ENCODE measurements at regions of chr2 and their contacts with region 1.

Region 1: GRCh38 chr2:54787755-54788366 is 64.4 kb downstream of the EML6 start:
- DNase-seq: peak; percentile 93
- H3K4me3 ChIP-seq: peak overlapping the region; percentile 71
- H3K27ac ChIP-seq: peak overlapping the region; percentile 95
- H3K4me1 ChIP-seq: peaks cover 81% of the 10 kb centered on the region
- CTCF ChIP-seq: no peak

Region 2: GRCh38 chr2:54522624-54523281 is 265.1 kb before region 1 on chr2:
- CTCF ChIA-PET with region 1: no interaction called
- POLR2A ChIA-PET with region 1: no interaction called
- intact Hi-C with region 1: no loop called
- DNase-seq: peak; percentile 89
- H3K4me3 ChIP-seq: no peak overlapping the region
- H3K27ac ChIP-seq: no peak overlapping the region
- H3K4me1 ChIP-seq: peaks cover 15% of the 10 kb centered on the region
- CTCF ChIP-seq: peak; percentile 93

Region 3: GRCh38 chr2:54558188-54559005 is 229.5 kb before region 1 on chr2:
- CTCF ChIA-PET with region 1: no interaction called
- POLR2A ChIA-PET with region 1: interaction called, 3 read pairs
- intact Hi-C with region 1: loop called (anchors 5 kb)
- DNase-seq: peak; percentile 89
- H3K4me3 ChIP-seq: peak overlapping the region; percentile 85
- H3K27ac ChIP-seq: peak overlapping the region; percentile 79
- H3K4me1 ChIP-seq: peaks cover 43% of the 10 kb centered on the region
- CTCF ChIP-seq: no peak

Region 4: GRCh38 chr2:54634564-54635511 is 153.0 kb before region 1 on chr2:
- CTCF ChIA-PET with region 1: no interaction called
- POLR2A ChIA-PET with region 1: no interaction called
- intact Hi-C with region 1: loop called (anchors 10 kb)
- DNase-seq: peak; percentile 92
- H3K4me3 ChIP-seq: peak overlapping the region; percentile 53
- H3K27ac ChIP-seq: peak overlapping the region; percentile 97
- H3K4me1 ChIP-seq: peaks cover 90% of the 10 kb centered on the region
- CTCF ChIP-seq: no peak

Region 5: DNA sequence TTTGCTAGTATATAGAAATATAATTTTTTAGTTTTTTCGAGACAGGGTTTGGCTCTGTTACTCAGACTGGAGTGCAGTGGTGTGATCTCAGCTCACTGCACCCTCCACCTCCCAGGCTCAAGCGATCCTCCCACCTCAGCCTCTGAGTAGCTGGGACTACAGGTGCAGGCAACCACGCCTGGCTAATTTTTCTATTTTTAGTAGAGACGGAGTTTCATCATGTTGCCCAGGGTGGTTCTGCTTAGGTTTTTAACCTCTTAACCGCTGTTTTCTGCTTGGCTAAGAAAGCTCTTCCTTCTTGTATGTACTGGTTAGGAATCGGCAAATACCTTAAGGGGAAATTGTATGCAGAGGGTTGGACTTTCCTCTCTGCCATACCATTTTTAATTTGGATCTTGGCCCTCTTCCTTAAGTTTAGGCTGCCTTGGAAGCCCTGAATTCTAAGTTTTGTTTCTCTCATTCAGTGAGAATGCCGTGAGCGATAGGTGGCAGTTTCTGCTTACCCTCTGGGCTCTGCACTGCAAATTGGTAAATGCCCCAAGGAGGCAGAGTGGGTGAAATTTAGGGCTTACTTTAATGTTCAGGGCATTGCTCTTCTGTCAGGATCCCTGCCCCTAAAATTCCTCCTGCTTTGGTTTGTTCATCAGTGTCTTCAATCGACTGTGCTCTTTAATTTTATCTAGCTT is 32.1 kb before region 1 on chr2:
- CTCF ChIA-PET with region 1: no interaction called
- POLR2A ChIA-PET with region 1: interaction called, 92 read pairs
- intact Hi-C with region 1: loop called (anchors 1 kb)
- DNase-seq: peak; percentile 95
- H3K4me3 ChIP-seq: peak overlapping the region; percentile 62
- H3K27ac ChIP-seq: peak overlapping the region; percentile 92
- H3K4me1 ChIP-seq: peaks cover 83% of the 10 kb centered on the region
- CTCF ChIP-seq: peak; percentile 83

Region 6: GRCh38 chr2:54773838-54774237 is 14.0 kb before region 1 on chr2:
- CTCF ChIA-PET with region 1: no interaction called
- POLR2A ChIA-PET with region 1: interaction called, 13 read pairs
- intact Hi-C with region 1: no loop called
- DNase-seq: no peak
- H3K4me3 ChIP-seq: no peak overlapping the region
- H3K27ac ChIP-seq: no peak overlapping the region
- H3K4me1 ChIP-seq: peaks cover 7% of the 10 kb centered on the region
- CTCF ChIP-seq: 0 out of 2 replicates have a peak, but pooled peaks have one; percentile 24

Region 7: DNA sequence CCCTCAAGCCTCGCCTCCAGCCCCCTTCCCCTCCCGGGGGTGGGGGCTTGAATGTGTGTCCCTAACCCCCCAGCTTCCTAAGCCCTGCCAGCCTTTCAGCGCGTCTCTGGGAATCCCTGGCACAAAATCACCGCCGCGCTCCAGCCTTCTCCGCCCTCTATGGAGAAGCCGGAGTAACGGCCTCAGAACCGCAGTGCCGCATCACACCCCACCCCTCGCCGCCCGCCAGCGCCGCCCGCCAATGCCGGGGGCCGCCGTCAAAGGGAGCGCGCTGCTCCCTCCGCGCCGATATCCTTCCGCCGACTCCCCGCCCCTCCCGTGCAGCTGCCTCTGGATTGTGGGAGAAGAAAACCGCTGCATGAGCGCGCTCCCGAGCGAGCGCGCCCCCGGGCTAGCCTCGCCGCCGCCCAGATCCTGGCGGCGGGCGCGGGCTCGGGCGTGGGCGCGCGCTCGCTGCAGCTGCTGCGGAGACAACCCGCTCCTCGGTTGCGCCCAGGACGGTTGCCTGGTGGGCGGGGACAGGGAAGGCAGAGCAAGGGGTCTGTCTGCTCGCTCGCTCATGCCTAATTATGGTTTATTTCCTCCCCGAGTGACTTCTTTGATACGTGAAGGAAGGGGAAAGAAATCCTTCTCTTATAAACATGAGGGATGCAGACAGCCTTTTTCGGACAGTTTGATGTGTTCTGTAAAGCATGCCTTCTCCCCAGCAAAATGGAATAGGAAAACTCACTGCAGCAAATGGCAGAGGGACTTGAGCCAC is 632.0 kb after region 1 on chr2 and contains the start of gene CCDC88A:
- CTCF ChIA-PET with region 1: no interaction called
- POLR2A ChIA-PET with region 1: no interaction called
- intact Hi-C with region 1: loop called (anchors 10 kb)
- DNase-seq: peak; percentile 96
- H3K4me3 ChIP-seq: peak within 1 kb of the TSS; percentile 81
- H3K27ac ChIP-seq: peak within 1 kb of the TSS; percentile 73
- H3K4me1 ChIP-seq: peaks cover 48% of the 10 kb centered on the region
- CTCF ChIP-seq: peak; percentile 41; the same call in 1 of the 2 replicates
- total RNA-seq, gene CCDC88A: 98.4 and 109 TPM in 2 replicates

Region 8: DNA sequence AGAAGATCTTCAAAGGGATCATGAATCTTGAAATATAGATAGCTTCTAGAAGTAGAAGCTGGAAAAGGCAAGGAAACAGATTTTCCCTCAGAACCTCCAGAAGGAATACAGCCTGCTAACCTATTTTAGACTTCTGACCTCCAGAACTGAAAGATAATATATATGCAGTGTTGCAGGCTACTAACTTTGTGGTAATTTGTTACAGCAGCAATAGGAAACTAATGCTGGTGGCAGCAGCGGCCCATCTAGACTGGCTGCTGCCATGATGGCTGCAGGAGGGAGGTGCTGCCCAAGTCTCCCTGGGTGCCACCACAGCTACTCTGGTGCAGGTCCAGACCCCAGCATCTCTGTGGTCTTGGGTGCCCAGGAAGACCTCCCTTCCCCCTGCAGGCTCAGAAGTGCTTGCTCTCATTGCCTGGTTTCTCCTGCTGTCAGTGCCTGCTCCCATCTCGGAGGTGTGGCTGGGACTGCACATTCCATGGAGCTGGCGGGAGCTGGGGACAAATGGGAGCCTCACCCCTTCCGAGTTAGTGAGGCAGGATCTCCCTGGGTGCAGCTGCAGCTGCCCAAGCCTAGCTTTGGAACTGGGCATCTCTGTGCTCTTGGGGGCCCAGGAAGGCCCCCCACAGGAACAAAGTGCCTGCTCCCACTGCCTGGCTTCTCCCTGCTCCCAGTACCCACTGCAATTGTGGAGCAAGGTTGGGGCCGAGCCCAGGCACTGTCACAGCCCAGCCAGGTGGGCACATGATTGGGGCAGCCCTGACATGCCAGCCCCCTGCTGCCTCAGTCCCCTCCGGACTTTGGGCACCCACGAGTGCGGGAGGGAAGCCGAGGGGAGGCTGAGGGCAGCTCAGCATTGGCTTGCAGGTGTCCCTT is 649.9 kb after region 1 on chr2:
- CTCF ChIA-PET with region 1: no interaction called
- POLR2A ChIA-PET with region 1: no interaction called
- intact Hi-C with region 1: no loop called
- DNase-seq: no peak
- H3K4me3 ChIP-seq: no peak overlapping the region
- H3K27ac ChIP-seq: no peak overlapping the region
- H3K4me1 ChIP-seq: no peaks in the 10 kb centered on the region
- CTCF ChIP-seq: no peak

Measured in OCI-LY7 (cell line).